H1 (cell line): ENCODE measurements at regions of chr11 and their contacts with region 1.

Region 1: GRCh38 chr11:117946842-117947526 is 17.8 kb upstream of the TMPRSS13 start:
- DNase-seq: peak; percentile 81 to 99
- H3K4me3 ChIP-seq: no peak overlapping the region
- H3K27ac ChIP-seq: no peak overlapping the region
- H3K4me1 ChIP-seq: 0 out of 7 replicates have a peak, but pooled peaks cover 0 to 2% (median 0%) of the 10 kb centered on the region in 4 experiments
- H3K27me3 ChIP-seq: no peaks in the 10 kb centered on the region
- CTCF ChIP-seq: peak; percentile 87 to 98 (median 98)
- EP300 ChIP-seq: 0 out of 3 replicates have a peak, but pooled peaks of 1 of the 2 experiments have one; percentile 9
- POLR2A ChIP-seq: no peak
- RAD21 ChIP-seq: peak; percentile 98 to 99

Region 2: DNA sequence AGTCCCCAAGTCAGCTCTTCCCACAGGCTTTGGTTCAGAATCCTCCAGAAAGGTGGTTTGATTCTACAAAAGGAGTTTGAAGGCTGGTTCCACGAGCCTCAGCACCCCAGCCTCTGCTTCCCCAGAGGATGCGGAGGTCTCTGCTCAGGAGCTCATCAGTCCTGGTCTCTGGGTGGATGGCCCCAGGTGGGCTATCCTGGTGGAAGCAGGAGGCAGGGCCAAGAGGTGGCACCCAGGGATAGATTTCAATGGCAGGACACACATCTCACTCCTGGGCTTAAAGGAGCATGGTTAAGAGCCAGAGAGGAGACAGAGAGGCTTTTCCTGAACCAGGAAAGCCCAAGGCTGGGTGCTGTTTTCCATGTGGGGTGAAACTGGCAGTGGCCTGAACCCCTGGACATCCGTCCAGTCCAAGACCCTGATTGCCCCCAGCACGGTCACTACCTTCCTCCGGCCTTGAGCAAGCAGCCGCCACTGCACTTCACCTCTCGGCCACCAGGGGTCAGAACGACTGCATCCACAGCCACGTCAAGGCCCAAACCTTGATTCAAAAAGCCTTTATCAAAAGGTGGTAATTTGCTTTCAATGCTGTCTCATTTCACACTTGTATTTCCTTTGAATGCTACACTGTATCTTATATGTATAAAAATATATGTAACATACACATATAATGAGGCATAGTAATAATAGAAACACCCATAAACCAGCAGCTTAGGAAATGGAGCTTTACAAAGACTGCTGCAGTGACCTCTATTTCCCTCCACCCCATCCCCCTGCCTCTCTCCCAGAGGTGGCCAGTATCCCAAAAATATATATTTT is 103.1 kb before region 1 on chr11:
- CTCF ChIA-PET with region 1: interaction called, 142 read pairs
- POLR2A ChIA-PET with region 1: no interaction called
- DNase-seq: peak in 1 of 2 experiments; percentile 95
- H3K4me3 ChIP-seq: no peak overlapping the region
- H3K27ac ChIP-seq: no peak overlapping the region
- H3K4me1 ChIP-seq: no peaks in the 10 kb centered on the region
- H3K27me3 ChIP-seq: no peaks in the 10 kb centered on the region
- CTCF ChIP-seq: peak; percentile 92 to 94 (median 92)
- EP300 ChIP-seq: no peak
- POLR2A ChIP-seq: no peak
- RAD21 ChIP-seq: peak; percentile 91 to 94

Region 3: DNA sequence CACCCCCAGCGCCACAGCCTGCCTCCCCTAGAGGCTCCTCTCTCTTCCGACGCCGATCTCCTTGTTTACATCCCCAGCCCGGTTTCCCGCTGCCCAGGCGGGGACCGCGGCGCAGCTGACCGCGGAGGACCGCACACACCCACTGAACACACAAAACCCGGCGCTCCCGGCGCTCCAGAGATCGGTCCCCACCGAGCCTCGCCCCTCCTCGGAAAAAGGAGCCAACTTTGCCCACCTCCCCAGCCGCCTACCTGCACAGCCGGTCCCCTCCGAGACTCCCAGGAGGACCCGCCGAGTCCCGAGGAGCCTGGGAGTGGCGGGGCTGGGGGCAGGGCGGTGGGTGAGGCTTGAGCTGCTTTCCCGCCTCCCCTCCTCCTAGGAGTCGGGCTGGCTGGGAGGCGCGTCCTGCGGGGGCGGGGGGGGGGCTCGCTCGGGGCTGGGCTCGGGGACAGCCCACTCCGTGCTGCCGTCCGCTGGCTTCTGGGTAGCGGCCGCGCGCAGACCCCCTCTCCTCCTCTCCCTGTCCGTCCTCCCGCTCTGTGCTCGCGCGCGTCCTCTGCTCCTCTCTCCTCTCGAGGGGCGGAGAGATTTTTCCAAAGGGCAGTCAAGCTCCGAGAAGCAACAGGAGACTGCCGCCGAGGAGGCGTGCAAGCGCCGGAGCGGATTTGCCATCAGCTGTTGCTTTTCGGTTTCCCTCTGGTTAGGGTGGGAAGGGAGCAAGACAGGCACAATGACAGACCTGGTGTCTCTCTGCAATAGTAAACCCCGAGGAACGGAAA is 70.5 kb before region 1 on chr11 and contains the start of gene FXYD6:
- CTCF ChIA-PET with region 1: interaction called, 16 read pairs
- POLR2A ChIA-PET with region 1: interaction called, 3 read pairs
- DNase-seq: peak in 1 of 2 experiments; percentile 78
- H3K4me3 ChIP-seq: peak within 1 kb of the TSS; percentile 86 to 96 (median 87)
- H3K27ac ChIP-seq: no peak within 1 kb of the TSS
- H3K4me1 ChIP-seq: peaks cover 9 to 27% (median 21%) of the 10 kb centered on the region in 4 experiments
- H3K27me3 ChIP-seq: peaks cover 0 to 17% (median 15%) of the 10 kb centered on the region in 4 experiments; a peak in 4 of 7 replicates
- CTCF ChIP-seq: no peak
- EP300 ChIP-seq: no peak
- POLR2A ChIP-seq: no peak
- RAD21 ChIP-seq: no peak
- total RNA-seq, gene FXYD6: 44.6 and 50.0 TPM in 2 replicates

Region 4: DNA sequence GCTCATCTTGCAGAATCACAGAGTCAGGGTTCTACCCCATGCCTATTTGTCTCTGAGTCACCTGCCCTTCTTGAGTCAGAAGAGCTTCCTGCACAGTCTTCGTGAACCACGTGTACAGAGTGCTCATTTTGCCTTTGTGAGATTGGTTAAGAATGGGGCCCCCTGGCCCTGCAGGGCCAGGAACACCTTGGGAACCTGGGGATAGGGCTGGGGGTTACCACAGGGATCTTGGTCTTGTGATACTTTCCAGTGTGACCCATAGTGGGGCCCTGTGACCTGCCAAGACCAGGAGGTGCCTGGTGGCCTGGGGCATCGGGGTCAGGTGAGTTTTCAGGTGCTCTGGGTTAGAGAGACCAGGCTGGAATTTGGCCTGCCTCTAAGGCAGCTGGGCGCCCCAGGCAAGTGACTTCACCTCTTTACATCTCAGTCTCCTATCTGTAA is 27.2 kb before region 1 on chr11:
- CTCF ChIA-PET with region 1: interaction called, 143 read pairs
- POLR2A ChIA-PET with region 1: no interaction called
- DNase-seq: no peak
- H3K4me3 ChIP-seq: no peak overlapping the region
- H3K27ac ChIP-seq: no peak overlapping the region
- H3K4me1 ChIP-seq: no peaks in the 10 kb centered on the region; a peak in 1 of 7 replicates
- H3K27me3 ChIP-seq: no peaks in the 10 kb centered on the region
- CTCF ChIP-seq: no peak
- EP300 ChIP-seq: no peak
- POLR2A ChIP-seq: no peak
- RAD21 ChIP-seq: no peak

Region 5: DNA sequence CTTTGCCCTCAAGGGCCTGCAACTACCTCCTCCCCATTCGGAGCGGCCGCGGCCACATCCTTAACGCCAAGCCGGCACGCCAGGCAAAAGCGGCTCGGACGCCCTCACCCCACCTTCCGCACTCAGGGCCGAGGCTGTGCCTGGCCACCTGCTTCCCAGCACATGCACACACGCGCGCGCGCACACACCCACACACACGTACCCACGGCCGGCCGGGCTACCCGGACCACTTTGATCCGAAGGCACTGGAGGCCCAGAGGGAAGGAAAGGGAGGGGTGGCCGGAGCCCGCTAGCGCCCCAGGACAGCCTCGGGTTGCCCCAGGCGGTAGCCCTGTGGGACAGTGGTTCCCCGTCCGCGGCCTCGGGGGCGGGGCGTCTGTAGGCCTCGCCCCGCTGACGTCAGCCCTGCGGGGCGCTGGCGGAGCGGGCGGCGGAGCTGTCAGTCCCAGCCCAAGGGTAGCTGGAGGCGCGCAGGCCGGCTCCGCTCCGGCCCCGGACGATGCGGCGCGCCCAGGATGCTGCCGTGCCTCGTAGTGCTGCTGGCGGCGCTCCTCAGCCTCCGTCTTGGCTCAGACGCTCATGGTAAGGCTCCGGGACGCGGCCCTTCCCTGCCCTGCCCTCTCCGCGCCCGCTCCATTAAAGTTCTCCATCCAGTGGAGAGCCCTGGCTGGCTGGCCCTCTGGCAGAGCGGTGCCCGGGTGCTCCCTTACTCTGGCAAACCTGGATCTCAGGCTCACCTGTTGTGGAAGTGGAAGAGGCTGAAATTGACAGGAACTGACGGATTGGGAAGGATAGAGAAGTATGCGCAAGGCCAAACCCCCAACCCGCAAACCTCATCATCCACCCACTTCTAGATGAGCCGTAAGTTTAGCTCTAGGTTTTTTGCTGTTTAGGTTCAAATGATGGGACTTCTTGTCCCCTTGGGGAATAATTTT is 39.2 kb after region 1 on chr11 and contains the start of gene IL10RA:
- CTCF ChIA-PET with region 1: interaction called, 15 read pairs
- POLR2A ChIA-PET with region 1: no interaction called
- DNase-seq: peak; percentile 64 to 93
- H3K4me3 ChIP-seq: peak within 1 kb of the TSS; percentile 44 to 64 (median 49)
- H3K27ac ChIP-seq: no peak within 1 kb of the TSS
- H3K4me1 ChIP-seq: peaks cover 0 to 3% (median 1%) of the 10 kb centered on the region in 4 experiments; a peak in 3 of 7 replicates
- H3K27me3 ChIP-seq: peaks cover 16 to 30% (median 22%) of the 10 kb centered on the region in 4 experiments
- CTCF ChIP-seq: no peak
- EP300 ChIP-seq: no peak
- POLR2A ChIP-seq: peak in 1 of 2 experiments; percentile 41; a peak in 1 of 3 replicates
- RAD21 ChIP-seq: 0 out of 4 replicates have a peak, but pooled peaks of 1 of the 2 experiments have one; percentile 0
- total RNA-seq, gene IL10RA: 0.11 and 0.31 TPM in 2 replicates